Endothelial cell of umbilical vein (primary cell): ENCODE measurements at regions of chr2 and their contacts with region 1.

Region 1: GRCh38 chr2:75608684-75609333 is 37.8 kb upstream of the MRPL19 start:
- DNase-seq: peak; percentile 60
- H3K4me3 ChIP-seq: no peak overlapping the region
- H3K27ac ChIP-seq: no peak overlapping the region
- H3K4me1 ChIP-seq: peaks cover 6% of the 10 kb centered on the region
- H3K27me3 ChIP-seq: peaks cover 7 to 14% of the 10 kb centered on the region in 2 experiments
- CTCF ChIP-seq: peak; percentile 97 to 99
- POLR2A ChIP-seq: no peak

Region 2: GRCh38 chr2:75480971-75481836 is 127.6 kb before region 1 on chr2:
- CTCF ChIA-PET with region 1: interaction called, 12 read pairs
- POLR2A ChIA-PET with region 1: no interaction called
- dilution Hi-C with region 1: no loop called
- intact Hi-C with region 1: no loop called
- DNase-seq: no peak
- H3K4me3 ChIP-seq: no peak overlapping the region
- H3K27ac ChIP-seq: no peak overlapping the region
- H3K4me1 ChIP-seq: no peaks in the 10 kb centered on the region
- H3K27me3 ChIP-seq: peaks cover 4 to 7% of the 10 kb centered on the region in 2 experiments
- CTCF ChIP-seq: peak in 1 of 2 donors; percentile 17
- POLR2A ChIP-seq: no peak

Region 3: GRCh38 chr2:75560768-75561565 is 47.8 kb before region 1 on chr2 and contains the start of gene EVA1A:
- CTCF ChIA-PET with region 1: interaction called, 33 read pairs
- POLR2A ChIA-PET with region 1: no interaction called
- dilution Hi-C with region 1: no loop called
- intact Hi-C with region 1: loop called (anchors 1 kb)
- DNase-seq: peak; percentile 85
- H3K4me3 ChIP-seq: peak within 1 kb of the TSS; percentile 63 to 94 (median 91)
- H3K27ac ChIP-seq: peak within 1 kb of the TSS; percentile 72
- H3K4me1 ChIP-seq: peaks cover 35% of the 10 kb centered on the region
- H3K27me3 ChIP-seq: no peaks in the 10 kb centered on the region
- CTCF ChIP-seq: no peak
- POLR2A ChIP-seq: peak; percentile 78
- total RNA-seq, gene EVA1A: 59.7 and 66.5 TPM in 2 replicates

Region 4: GRCh38 chr2:75595551-75596395 is 13.0 kb before region 1 on chr2:
- CTCF ChIA-PET with region 1: interaction called, 19 read pairs
- POLR2A ChIA-PET with region 1: no interaction called
- dilution Hi-C with region 1: no loop called
- intact Hi-C with region 1: no loop called
- DNase-seq: peak; percentile 64
- H3K4me3 ChIP-seq: no peak overlapping the region
- H3K27ac ChIP-seq: peak overlapping the region; percentile 63
- H3K4me1 ChIP-seq: peaks cover 3% of the 10 kb centered on the region
- H3K27me3 ChIP-seq: no peaks in the 10 kb centered on the region
- CTCF ChIP-seq: no peak
- POLR2A ChIP-seq: no peak

Region 5: GRCh38 chr2:75619956-75620740 is 11.3 kb after region 1 on chr2:
- CTCF ChIA-PET with region 1: interaction called, 14 read pairs
- POLR2A ChIA-PET with region 1: no interaction called
- dilution Hi-C with region 1: no loop called
- intact Hi-C with region 1: no loop called
- DNase-seq: peak; percentile 43
- H3K4me3 ChIP-seq: no peak overlapping the region
- H3K27ac ChIP-seq: no peak overlapping the region
- H3K4me1 ChIP-seq: peaks cover 16% of the 10 kb centered on the region
- H3K27me3 ChIP-seq: no peaks in the 10 kb centered on the region
- CTCF ChIP-seq: no peak
- POLR2A ChIP-seq: no peak

Region 6: DNA sequence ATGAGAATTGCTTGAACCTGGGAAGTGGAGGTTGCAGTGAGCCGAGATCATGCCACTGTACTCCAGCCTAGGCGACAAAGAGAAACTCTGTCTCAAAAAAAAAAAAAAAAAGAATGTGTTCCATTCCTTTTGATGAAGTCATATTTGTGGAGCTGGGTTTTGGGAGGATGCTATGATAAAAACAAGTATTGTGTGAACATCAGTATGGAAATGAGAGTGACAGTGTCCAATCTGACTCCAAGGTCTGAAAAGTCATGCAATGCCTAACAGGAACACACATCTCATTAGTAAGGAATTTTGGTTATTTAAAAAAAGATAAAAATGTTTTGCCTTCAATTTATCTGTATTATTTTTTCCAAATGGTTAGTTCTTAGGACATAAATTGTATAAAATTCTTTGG is 90.1 kb after region 1 on chr2:
- CTCF ChIA-PET with region 1: no interaction called
- POLR2A ChIA-PET with region 1: no interaction called
- dilution Hi-C with region 1: no loop called
- intact Hi-C with region 1: no loop called
- DNase-seq: no peak
- H3K4me3 ChIP-seq: no peak overlapping the region
- H3K27ac ChIP-seq: no peak overlapping the region
- H3K4me1 ChIP-seq: peaks cover 2% of the 10 kb centered on the region
- H3K27me3 ChIP-seq: no peaks in the 10 kb centered on the region
- CTCF ChIP-seq: no peak
- POLR2A ChIP-seq: no peak

Region 7: GRCh38 chr2:76080154-76080553 is 471.3 kb after region 1 on chr2:
- CTCF ChIA-PET with region 1: no interaction called
- POLR2A ChIA-PET with region 1: no interaction called
- dilution Hi-C with region 1: no loop called
- intact Hi-C with region 1: no loop called
- DNase-seq: no peak
- H3K4me3 ChIP-seq: no peak overlapping the region
- H3K27ac ChIP-seq: no peak overlapping the region
- H3K4me1 ChIP-seq: no peaks in the 10 kb centered on the region
- H3K27me3 ChIP-seq: no peaks in the 10 kb centered on the region
- CTCF ChIP-seq: no peak
- POLR2A ChIP-seq: no peak